ENCODE measurements at regions of chr16 and their contacts with region 1.

Region 1: GRCh38 chr16:3752984-3753383 is 35.7 kb upstream of the TRAP1 start:
- DNase-seq: peak; percentile 66 to 74
- ATAC-seq: peak; percentile 77 to 81
- H3K4me3 ChIP-seq: no peak overlapping the region
- H3K27ac ChIP-seq: peak overlapping the region; percentile 35 to 70 (median 53)
- H3K4me1 ChIP-seq: peaks cover 32 to 37% of the 10 kb centered on the region in 2 donors
- H3K27me3 ChIP-seq: no peaks in the 10 kb centered on the region
- CTCF ChIP-seq: peak; percentile 26 to 57 (median 35)
- POLR2A ChIP-seq: no peak

Region 2: GRCh38 chr16:3509470-3509928 is 243.5 kb before region 1 on chr16:
- in situ Hi-C with region 1: no loop called
- intact Hi-C with region 1: no loop called
- DNase-seq: no peak
- ATAC-seq: no peak
- H3K4me3 ChIP-seq: no peak overlapping the region
- H3K27ac ChIP-seq: no peak overlapping the region
- H3K4me1 ChIP-seq: no peaks in the 10 kb centered on the region
- H3K27me3 ChIP-seq: no peaks in the 10 kb centered on the region
- CTCF ChIP-seq: no peak
- POLR2A ChIP-seq: no peak

Region 3: DNA sequence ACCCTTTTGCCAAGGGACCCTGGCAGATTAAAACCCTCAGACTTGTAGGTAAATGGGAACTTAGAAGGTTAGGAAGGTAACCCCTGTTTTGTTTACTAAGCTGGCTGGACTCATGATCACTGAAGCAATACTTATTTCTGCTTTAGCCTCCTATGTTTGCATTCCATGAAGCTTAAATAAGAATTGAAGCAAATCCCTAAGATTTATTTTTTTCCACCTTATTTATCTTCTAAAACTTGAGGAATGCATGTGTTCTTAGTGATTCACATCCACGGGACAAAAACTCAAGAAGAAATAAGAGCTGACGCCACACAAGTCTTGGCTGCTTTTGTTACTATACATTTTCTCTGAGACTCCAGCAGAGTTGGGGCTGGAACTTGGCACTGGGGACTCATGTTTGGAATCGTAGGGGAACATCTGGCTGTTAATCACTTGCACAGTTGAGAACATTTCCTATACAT is 216.7 kb before region 1 on chr16:
- in situ Hi-C with region 1: no loop called
- intact Hi-C with region 1: no loop called
- DNase-seq: no peak
- ATAC-seq: no peak
- H3K4me3 ChIP-seq: no peak overlapping the region
- H3K27ac ChIP-seq: peak overlapping the region in 1 of 4 donors; percentile 45
- H3K4me1 ChIP-seq: peaks cover 25 to 35% of the 10 kb centered on the region in 2 donors
- H3K27me3 ChIP-seq: no peaks in the 10 kb centered on the region
- CTCF ChIP-seq: no peak
- POLR2A ChIP-seq: no peak

Region 4: GRCh38 chr16:3717235-3718018 is 35.6 kb before region 1 on chr16 and contains the start of gene TRAP1:
- in situ Hi-C with region 1: no loop called
- intact Hi-C with region 1: loop called (anchors 2 kb)
- DNase-seq: peak; percentile 81 to 88
- ATAC-seq: peak; percentile 91 to 93
- H3K4me3 ChIP-seq: peak within 1 kb of the TSS; percentile 69 to 99 (median 78)
- H3K27ac ChIP-seq: peak within 1 kb of the TSS; percentile 88 to 96 (median 93)
- H3K4me1 ChIP-seq: peaks cover 12 to 17% of the 10 kb centered on the region in 2 donors
- H3K27me3 ChIP-seq: no peaks in the 10 kb centered on the region
- CTCF ChIP-seq: no peak
- POLR2A ChIP-seq: peak; percentile 87 to 91
- total RNA-seq, gene TRAP1: 103 to 140 (median 122) TPM

Measured in gastrocnemius medialis (tissue), 4 donors.